BJ (cell line): ENCODE measurements at regions of chr2 and their contacts with region 1.

Region 1: GRCh38 chr2:101252408-101253012 is at the start of gene CNOT11:
- DNase-seq: peak; percentile 91
- H3K4me3 ChIP-seq: peak within 1 kb of the TSS; percentile 96
- H3K27me3 ChIP-seq: no peaks in the 10 kb centered on the region
- CTCF ChIP-seq: no peak
- polyA plus RNA-seq, gene CNOT11: 63.0 and 68.6 TPM in 2 replicates

Region 2: GRCh38 chr2:99701503-99701902 is 1551.0 kb before region 1 on chr2:
- CTCF ChIA-PET with region 1: no interaction called
- POLR2A ChIA-PET with region 1: interaction called, 18 read pairs
- DNase-seq: no peak
- H3K4me3 ChIP-seq: no peak overlapping the region
- H3K27me3 ChIP-seq: no peaks in the 10 kb centered on the region
- CTCF ChIP-seq: no peak

Region 3: GRCh38 chr2:101238930-101239759 is 13.4 kb before region 1 on chr2:
- CTCF ChIA-PET with region 1: interaction called, 10 read pairs
- POLR2A ChIA-PET with region 1: no interaction called
- DNase-seq: no peak
- H3K4me3 ChIP-seq: no peak overlapping the region
- H3K27me3 ChIP-seq: no peaks in the 10 kb centered on the region
- CTCF ChIP-seq: no peak